Calu3 (cell line): ENCODE measurements at regions of chr4 and their contacts with region 1.

Region 1: GRCh38 chr4:128427832-128428366 is 140.3 kb upstream of the PGRMC2 start:
- DNase-seq: peak; percentile 65
- H3K4me3 Mint-ChIP-seq: peak overlapping the region; percentile 11
- H3K27ac Mint-ChIP-seq: no peak overlapping the region
- H3K4me1 Mint-ChIP-seq: peaks cover 17% of the 10 kb centered on the region
- H3K27me3 Mint-ChIP-seq: no peaks in the 10 kb centered on the region
- CTCF ChIP-seq: peak; percentile 36

Region 2: GRCh38 chr4:128191115-128191781 is 236.7 kb before region 1 on chr4:
- CTCF ChIA-PET with region 1: no interaction called
- intact Hi-C with region 1: loop called (anchors 5 kb)
- DNase-seq: peak; percentile 51
- H3K4me3 Mint-ChIP-seq: no peak overlapping the region
- H3K27ac Mint-ChIP-seq: no peak overlapping the region
- H3K4me1 Mint-ChIP-seq: peaks cover 8% of the 10 kb centered on the region
- H3K27me3 Mint-ChIP-seq: no peaks in the 10 kb centered on the region
- CTCF ChIP-seq: peak; percentile 58

Region 3: DNA sequence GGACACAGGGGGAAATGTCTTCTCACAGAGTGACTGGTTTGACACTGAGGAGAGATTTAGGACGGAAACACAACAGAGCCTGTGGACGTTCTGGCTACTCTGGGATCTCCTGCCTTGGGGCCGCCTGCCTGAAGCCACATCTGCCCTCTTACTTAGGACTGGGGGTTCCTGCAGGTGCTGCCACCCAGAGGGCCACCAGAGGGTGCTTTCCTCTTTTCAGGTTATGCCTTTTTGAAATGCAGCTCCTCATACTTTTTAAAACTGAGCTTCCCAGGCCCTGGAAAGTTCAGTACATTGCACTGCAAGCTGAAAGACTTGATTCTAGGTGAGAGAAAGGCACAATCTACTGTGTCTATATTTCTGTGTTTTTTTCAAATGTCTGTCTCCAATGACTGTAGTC is 48.0 kb before region 1 on chr4:
- CTCF ChIA-PET with region 1: interaction called, 11 read pairs
- intact Hi-C with region 1: loop called (anchors 5 kb)
- DNase-seq: peak; percentile 55
- H3K4me3 Mint-ChIP-seq: no peak overlapping the region
- H3K27ac Mint-ChIP-seq: no peak overlapping the region
- H3K4me1 Mint-ChIP-seq: peaks cover 13% of the 10 kb centered on the region
- H3K27me3 Mint-ChIP-seq: no peaks in the 10 kb centered on the region
- CTCF ChIP-seq: no peak

Region 4: DNA sequence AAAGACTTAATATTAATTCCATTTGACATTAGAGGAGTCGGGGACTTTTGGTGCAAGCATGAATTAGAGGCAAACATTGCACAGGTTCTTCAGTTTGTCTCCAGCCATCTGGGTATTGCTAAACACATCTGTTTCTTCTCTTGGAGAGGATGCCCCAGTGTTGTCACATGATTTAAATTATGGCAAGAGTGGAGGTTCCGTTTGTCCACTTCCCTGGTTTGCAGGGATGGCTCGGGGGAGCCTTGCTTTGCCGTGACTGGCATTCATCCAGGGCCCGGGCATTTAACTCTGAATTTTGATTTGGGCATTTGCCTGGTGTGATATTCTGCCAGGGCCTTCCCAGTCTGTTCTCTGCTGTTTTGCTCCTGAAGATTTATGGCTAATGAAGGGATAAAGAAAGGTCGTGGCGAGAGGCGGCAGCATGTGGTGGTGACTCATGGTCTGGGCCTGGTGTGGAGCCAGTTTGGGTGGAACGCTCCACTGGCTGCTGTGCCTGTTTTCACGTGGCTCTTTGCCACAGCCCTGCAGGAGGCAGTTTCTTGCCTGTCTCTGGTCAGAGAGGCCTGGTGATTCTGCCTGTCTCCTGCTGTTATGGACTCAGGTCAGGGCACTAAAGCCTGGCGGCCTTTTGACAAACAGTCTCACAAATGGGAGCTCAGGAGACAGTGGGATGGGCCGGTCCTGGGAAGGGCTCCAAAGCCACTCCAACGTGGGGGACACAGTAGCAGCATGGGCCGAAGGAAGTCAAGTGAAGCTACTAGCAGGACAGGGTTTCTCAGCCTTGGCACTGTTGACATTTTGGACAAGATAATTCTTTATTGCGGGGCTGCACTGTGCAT is 40.9 kb before region 1 on chr4:
- CTCF ChIA-PET with region 1: no interaction called
- intact Hi-C with region 1: loop called (anchors 5 kb)
- DNase-seq: peak; percentile 59
- H3K4me3 Mint-ChIP-seq: no peak overlapping the region
- H3K27ac Mint-ChIP-seq: peak overlapping the region; percentile 64
- H3K4me1 Mint-ChIP-seq: peaks cover 26% of the 10 kb centered on the region
- H3K27me3 Mint-ChIP-seq: no peaks in the 10 kb centered on the region
- CTCF ChIP-seq: no peak

Region 5: DNA sequence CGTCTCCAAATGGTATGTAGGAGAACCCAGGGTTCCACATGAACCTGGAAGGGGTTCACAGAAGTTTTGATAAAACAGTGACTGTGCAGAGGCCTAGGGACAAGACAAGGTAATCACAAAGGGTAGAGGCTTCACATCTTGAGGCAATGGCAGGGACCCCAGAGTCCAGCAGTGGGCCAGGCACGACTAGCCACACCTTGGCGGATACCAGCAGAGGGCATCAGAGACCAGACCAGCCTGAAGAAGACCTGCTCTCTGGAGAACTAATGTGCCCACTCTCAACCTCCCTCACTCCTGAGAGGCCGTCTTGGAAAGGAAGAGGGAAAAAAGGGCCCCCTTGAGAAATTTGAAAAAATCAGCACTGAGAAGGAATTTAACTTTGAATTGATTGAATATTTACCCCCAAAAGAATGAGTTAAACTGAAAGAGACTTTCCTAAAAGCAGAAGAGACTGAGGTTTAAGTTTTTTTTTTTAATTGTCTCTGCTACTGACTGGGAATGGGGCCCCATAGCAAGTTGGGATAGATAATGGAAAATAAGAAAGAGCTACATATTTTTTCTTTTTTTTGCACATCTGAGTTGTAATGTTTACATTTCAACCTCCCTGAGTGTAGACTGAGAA is 137.8 kb after region 1 on chr4:
- CTCF ChIA-PET with region 1: no interaction called
- intact Hi-C with region 1: no loop called
- DNase-seq: peak; percentile 75
- H3K4me3 Mint-ChIP-seq: no peak overlapping the region
- H3K27ac Mint-ChIP-seq: no peak overlapping the region
- H3K4me1 Mint-ChIP-seq: peaks cover 41% of the 10 kb centered on the region
- H3K27me3 Mint-ChIP-seq: no peaks in the 10 kb centered on the region
- CTCF ChIP-seq: peak; percentile 49

Region 6: GRCh38 chr4:128863312-128864075 is 435.6 kb after region 1 on chr4:
- CTCF ChIA-PET with region 1: no interaction called
- intact Hi-C with region 1: loop called (anchors 10 kb)
- DNase-seq: peak; percentile 74
- H3K4me3 Mint-ChIP-seq: no peak overlapping the region
- H3K27ac Mint-ChIP-seq: no peak overlapping the region
- H3K4me1 Mint-ChIP-seq: no peaks in the 10 kb centered on the region
- H3K27me3 Mint-ChIP-seq: no peaks in the 10 kb centered on the region
- CTCF ChIP-seq: peak; percentile 63